B cell (primary cell): ENCODE measurements at regions of chr10 and their contacts with region 1.

Region 1: DNA sequence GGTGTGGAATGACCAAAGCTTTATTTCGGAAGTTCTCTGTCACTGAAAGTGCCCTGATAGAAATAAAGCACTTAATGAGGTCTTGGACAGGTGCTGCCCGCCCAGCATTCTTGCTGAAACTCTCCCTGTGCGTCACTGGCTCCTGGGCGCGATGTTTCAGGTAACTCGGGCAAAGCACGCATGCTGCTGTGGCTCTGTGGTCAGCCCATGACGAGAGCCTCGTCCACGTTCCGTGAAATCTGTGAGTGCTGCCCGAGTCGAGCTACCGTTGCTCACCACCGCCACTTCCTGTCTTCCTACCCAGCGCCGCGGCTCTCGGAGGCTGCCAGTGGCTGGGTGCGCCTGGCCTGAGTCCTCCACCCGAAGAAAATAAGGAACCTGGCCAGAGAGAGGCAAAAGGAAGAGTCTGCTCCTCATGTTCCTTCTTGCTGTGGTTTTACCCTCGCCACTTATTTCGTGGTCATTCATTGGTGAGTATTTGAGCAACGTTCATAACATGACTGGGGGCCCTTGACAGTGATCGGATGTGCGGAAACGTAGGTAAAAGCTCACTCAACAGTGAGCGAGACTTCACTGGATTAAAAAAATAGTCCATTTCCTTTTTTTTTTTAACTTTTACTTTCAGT is 95.5 kb downstream of the MAP3K8 start:
- DNase-seq: peak; percentile 95
- ATAC-seq: peak; percentile 83
- H3K4me3 ChIP-seq: peak overlapping the region; percentile 44 to 63 (median 59)
- H3K4me3 Mint-ChIP-seq: peak overlapping the region; percentile 91
- H3K27ac ChIP-seq: peak overlapping the region; percentile 93 to 94
- H3K27ac Mint-ChIP-seq: peak overlapping the region; percentile 99
- H3K4me1 ChIP-seq: peaks cover 71 to 80% of the 10 kb centered on the region in 2 donors
- H3K4me1 Mint-ChIP-seq: peaks cover 69% of the 10 kb centered on the region
- H3K27me3 ChIP-seq: no peaks in the 10 kb centered on the region
- H3K27me3 Mint-ChIP-seq: no peaks in the 10 kb centered on the region
- CTCF ChIP-seq: no peak

Region 2: DNA sequence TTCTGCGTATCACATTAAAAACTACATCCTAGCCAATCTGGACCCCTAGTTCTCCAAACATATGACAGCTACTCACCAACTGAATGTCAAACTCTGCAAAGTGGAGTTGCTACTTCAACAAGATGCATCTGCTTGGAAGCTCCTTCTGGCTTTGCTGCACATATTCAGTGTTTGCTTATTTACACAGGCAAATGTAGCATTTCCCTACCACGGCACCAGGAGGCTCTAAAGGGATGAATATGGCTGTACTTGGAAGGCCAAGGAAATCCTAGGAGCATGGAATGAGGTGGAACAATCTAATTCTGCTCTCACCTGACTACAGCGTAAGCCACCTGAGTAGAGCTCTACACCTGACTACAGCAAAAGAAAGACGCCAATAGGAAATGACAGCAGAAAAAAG is 220.1 kb before region 1 on chr10:
- CTCF ChIA-PET with region 1: no interaction called
- POLR2A ChIA-PET with region 1: no interaction called
- intact Hi-C with region 1: no loop called
- DNase-seq: no peak
- ATAC-seq: no peak
- H3K4me3 ChIP-seq: no peak overlapping the region
- H3K4me3 Mint-ChIP-seq: no peak overlapping the region
- H3K27ac ChIP-seq: no peak overlapping the region
- H3K27ac Mint-ChIP-seq: no peak overlapping the region
- H3K4me1 ChIP-seq: no peaks in the 10 kb centered on the region
- H3K4me1 Mint-ChIP-seq: no peaks in the 10 kb centered on the region
- H3K27me3 ChIP-seq: no peaks in the 10 kb centered on the region
- H3K27me3 Mint-ChIP-seq: no peaks in the 10 kb centered on the region
- CTCF ChIP-seq: no peak

Region 3: GRCh38 chr10:30413996-30414576 is 115.4 kb before region 1 on chr10:
- CTCF ChIA-PET with region 1: interaction called, 87 read pairs
- POLR2A ChIA-PET with region 1: interaction called, 3 read pairs
- intact Hi-C with region 1: loop called (anchors 1 kb)
- DNase-seq: peak; percentile 79
- ATAC-seq: peak; percentile 64
- H3K4me3 ChIP-seq: no peak overlapping the region
- H3K4me3 Mint-ChIP-seq: no peak overlapping the region
- H3K27ac ChIP-seq: peak overlapping the region in 1 of 2 donors; percentile 55
- H3K27ac Mint-ChIP-seq: peak overlapping the region; percentile 71
- H3K4me1 ChIP-seq: peaks cover 34 to 35% of the 10 kb centered on the region in 2 donors
- H3K4me1 Mint-ChIP-seq: peaks cover 43% of the 10 kb centered on the region
- H3K27me3 ChIP-seq: no peaks in the 10 kb centered on the region
- H3K27me3 Mint-ChIP-seq: no peaks in the 10 kb centered on the region
- CTCF ChIP-seq: peak; percentile 85

Region 4: DNA sequence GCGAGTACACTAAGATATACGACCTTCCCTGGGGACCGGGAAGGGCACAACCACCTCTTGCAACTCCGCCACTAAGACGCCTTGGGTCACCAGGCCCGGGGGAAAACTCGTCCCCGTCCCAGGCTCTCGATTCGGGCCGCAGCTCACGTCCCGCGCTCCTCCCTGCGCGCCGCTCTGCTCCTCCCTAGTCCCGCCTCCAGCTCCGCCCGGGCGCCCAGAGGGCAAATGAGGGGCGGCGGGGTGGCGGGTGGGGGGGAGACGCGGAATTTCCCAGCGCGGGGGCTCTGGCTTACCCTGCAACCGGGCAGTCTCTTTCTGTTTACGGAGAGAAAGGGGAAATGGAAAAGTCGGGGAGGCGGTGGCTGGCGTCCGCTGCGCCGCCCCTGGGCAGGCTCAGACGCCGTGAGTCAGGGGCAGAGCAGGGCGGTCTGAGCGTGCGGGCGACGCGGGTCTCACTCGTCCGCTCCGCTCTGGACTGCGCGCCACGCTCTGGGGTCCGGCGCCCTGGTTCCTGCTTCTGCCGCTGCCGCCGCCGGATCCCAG is 95.7 kb before region 1 on chr10 and contains the start of gene MAP3K8:
- CTCF ChIA-PET with region 1: interaction called, 35 read pairs
- POLR2A ChIA-PET with region 1: interaction called, 43 read pairs
- intact Hi-C with region 1: loop called (anchors 1 kb)
- DNase-seq: peak; percentile 96
- ATAC-seq: peak; percentile 73
- H3K4me3 ChIP-seq: peak within 1 kb of the TSS; percentile 93 to 99 (median 97)
- H3K4me3 Mint-ChIP-seq: peak within 1 kb of the TSS; percentile 98
- H3K27ac ChIP-seq: peak within 1 kb of the TSS; percentile 95 to 99
- H3K27ac Mint-ChIP-seq: peak within 1 kb of the TSS; percentile 97
- H3K4me1 ChIP-seq: peaks cover 56 to 74% of the 10 kb centered on the region in 2 donors
- H3K4me1 Mint-ChIP-seq: peaks cover 71% of the 10 kb centered on the region
- H3K27me3 ChIP-seq: no peaks in the 10 kb centered on the region
- H3K27me3 Mint-ChIP-seq: no peaks in the 10 kb centered on the region
- CTCF ChIP-seq: no peak
- total RNA-seq, gene MAP3K8: 97.0 and 104 TPM in 2 replicates

Region 5: GRCh38 chr10:30493609-30494530 is 35.6 kb before region 1 on chr10:
- CTCF ChIA-PET with region 1: interaction called, 15 read pairs
- POLR2A ChIA-PET with region 1: interaction called, 3 read pairs
- intact Hi-C with region 1: loop called (anchors 5 kb)
- DNase-seq: peak; percentile 63
- ATAC-seq: peak; percentile 53
- H3K4me3 ChIP-seq: peak overlapping the region in 3 of 5 experiments; percentile 14 to 21 (median 14)
- H3K4me3 Mint-ChIP-seq: peak overlapping the region; percentile 77
- H3K27ac ChIP-seq: peak overlapping the region; percentile 62 to 88
- H3K27ac Mint-ChIP-seq: peak overlapping the region; percentile 91
- H3K4me1 ChIP-seq: peaks cover 97 to 98% of the 10 kb centered on the region in 2 donors
- H3K4me1 Mint-ChIP-seq: peaks cover 91% of the 10 kb centered on the region
- H3K27me3 ChIP-seq: no peaks in the 10 kb centered on the region
- H3K27me3 Mint-ChIP-seq: no peaks in the 10 kb centered on the region
- CTCF ChIP-seq: peak; percentile 42

Region 6: DNA sequence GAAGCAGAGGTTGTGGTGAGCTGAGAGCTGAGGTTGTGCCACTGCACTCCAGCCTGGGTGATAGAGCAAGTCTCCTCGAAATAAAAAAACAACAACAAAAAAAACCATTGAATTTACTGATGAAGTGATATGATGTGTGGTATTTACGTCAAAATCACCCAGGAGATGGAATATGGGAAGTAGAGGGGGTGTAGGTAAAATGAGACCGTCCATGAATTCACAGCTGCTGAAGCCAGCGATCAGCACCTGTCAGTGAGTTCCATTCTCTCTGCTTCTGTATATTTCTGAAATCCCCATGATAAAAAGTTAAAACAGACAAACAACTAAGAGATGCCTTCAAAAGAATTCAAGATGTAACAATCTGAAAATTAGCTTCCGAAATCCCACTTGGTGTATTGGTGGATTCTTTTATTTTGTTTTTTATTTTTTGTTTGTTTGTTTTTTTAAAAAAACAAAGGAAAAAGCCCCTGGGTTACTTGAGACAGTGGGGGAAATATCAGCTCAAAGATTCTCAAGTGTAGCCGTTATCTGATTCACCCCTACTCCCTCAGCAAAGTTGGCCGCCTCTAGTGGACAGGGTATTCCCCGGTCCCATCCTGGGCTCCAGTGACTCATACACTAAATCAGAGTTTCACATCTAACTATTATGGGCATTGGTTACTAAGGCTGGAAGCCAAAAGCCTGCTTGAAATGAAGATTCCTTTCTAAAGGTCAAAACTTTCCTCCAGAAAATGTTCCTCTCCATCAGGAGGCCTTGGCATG is 19.1 kb before region 1 on chr10:
- CTCF ChIA-PET with region 1: interaction called, 6 read pairs
- POLR2A ChIA-PET with region 1: interaction called, 6 read pairs
- intact Hi-C with region 1: loop called (anchors 1 kb)
- DNase-seq: no peak
- ATAC-seq: peak; percentile 84
- H3K4me3 ChIP-seq: no peak overlapping the region
- H3K4me3 Mint-ChIP-seq: peak overlapping the region; percentile 23
- H3K27ac ChIP-seq: no peak overlapping the region
- H3K27ac Mint-ChIP-seq: peak overlapping the region; percentile 66
- H3K4me1 ChIP-seq: peaks cover 22 to 24% of the 10 kb centered on the region in 2 donors
- H3K4me1 Mint-ChIP-seq: peaks cover 39% of the 10 kb centered on the region
- H3K27me3 ChIP-seq: no peaks in the 10 kb centered on the region
- H3K27me3 Mint-ChIP-seq: no peaks in the 10 kb centered on the region
- CTCF ChIP-seq: no peak

Region 7: DNA sequence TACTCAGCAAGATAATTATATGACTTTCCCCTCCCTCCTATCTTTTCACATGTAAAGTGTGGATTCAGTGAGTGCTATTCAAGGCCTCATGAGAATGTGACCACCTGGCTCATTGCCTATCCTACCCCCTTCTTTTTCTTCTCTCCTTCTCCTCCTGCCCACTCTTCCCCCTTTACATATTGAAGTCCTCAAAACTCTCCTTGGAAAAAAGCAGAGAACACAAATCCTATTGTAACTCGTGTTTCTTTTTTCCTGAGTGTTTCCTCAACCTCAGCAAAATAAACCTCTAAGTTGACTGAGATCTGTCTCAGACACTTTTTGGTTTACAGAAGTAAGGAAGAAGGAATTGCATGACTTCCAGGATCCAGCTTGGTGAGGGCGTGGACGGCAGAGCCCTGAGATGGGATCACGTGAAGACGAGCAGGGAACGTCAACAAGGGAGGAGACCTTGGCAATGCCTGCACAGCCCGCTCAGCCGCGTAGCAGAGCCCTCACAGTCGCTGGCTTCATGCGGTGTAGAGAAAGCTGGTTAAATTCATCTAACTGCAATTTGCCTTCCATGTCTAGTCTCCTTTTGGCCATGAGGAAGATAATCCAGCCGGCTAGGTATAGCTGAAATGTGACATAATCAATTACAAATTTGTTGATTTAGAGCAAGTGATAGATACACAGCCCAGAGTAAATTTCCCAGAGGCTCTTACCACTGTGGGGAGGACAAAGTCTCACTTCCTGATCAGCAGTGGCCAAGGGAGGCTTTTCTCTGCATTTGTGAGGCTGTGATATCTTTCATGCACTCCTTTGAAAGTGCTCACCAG is 24.3 kb after region 1 on chr10:
- CTCF ChIA-PET with region 1: no interaction called
- POLR2A ChIA-PET with region 1: no interaction called
- intact Hi-C with region 1: no loop called
- DNase-seq: no peak
- ATAC-seq: no peak
- H3K4me3 ChIP-seq: no peak overlapping the region
- H3K4me3 Mint-ChIP-seq: no peak overlapping the region
- H3K27ac ChIP-seq: no peak overlapping the region
- H3K27ac Mint-ChIP-seq: no peak overlapping the region
- H3K4me1 ChIP-seq: no peaks in the 10 kb centered on the region
- H3K4me1 Mint-ChIP-seq: peaks cover 5% of the 10 kb centered on the region
- H3K27me3 ChIP-seq: no peaks in the 10 kb centered on the region
- H3K27me3 Mint-ChIP-seq: no peaks in the 10 kb centered on the region
- CTCF ChIP-seq: no peak